Posterior vena cava (tissue), 2 donors: ENCODE measurements at regions of chr2 and their contacts with region 1.

Region 1: GRCh38 chr2:113940891-113941290 is 51.0 kb downstream of the ACTR3 start:
- DNase-seq: no peak

Region 2: DNA sequence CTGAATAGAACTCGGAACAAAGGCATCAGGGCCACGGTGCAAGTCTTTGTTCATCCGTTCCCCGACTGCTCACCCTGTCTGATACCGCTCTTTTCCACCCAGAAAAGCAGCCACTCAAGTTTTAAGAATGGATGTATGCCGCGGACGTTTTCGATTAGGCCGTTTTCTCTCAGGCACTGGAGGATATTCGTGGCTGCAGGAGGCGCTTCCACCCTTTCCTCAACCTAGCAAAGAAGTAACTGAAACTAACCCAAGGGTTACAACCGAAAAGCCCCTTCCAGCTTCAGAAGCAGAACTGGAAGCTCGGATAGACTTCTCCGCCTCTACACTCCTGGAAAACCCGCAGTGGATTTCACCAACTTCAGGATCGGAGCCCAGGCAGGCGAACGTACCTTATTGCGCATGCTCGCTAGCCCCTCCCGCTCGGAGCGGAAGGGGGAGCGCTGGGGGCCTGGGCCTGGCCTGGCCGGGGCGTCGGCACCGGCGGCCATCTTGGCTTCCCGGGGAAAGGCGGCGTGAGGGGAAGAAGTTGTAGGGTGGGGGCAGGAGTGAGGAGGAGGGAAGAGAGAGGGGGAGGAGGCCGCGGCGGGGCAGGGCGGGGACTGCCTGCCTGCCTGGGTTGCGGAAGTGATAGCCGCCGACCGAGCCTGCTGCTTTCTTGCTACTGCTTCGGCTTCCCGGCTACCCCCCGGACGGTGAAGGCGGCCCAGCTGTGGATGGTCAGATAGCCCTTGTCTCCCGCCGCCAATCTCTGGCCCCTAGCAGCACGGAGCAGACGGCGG is 51.2 kb before region 1 on chr2 and contains the start of gene ACTR3:
- intact Hi-C with region 1: loop called in 1 of 2 experiments (anchors 10 kb)
- DNase-seq: peak; percentile 99
- total RNA-seq, gene ACTR3: 322 to 408 TPM